ENCODE measurements at regions of chr19 and their contacts with region 1.

Region 1: DNA sequence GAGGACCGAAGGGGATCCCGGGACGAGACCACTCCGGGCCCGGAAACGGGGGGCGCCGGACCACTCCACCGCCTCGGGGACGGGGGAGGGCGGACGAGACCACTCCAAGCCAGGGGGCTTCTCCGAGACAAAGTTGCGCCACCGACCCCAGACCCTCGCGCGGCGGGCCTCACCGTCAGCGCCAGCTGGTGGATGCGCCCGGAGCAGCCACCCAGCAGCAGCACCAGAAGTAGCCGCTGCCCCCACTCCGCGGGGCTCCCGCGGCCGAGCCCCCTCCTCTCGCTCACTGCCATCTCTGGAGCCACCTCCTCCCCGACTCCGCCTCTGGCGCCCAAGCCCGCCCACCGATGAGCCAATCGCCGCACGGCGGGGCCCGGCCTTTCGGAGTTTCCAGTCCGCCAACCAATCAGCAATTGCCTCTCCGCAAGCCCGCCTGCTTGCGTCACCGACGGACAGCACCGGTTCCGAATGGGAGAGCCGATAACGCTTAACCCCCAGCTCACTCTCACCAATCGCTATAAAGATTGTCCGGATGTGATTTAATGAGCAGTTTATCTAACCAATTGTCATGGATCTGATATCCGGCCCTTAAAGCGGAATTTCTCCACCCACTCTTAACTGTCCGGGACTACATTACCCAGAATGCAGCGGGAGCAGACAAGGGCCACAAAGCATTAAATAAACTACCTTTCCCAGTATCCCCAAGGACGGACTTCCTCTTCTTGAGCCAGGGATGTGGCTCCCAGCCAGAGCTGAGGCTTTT is at the start of gene GPR108:
- DNase-seq: peak; percentile 98
- CTCF ChIP-seq: no peak

Region 2: DNA sequence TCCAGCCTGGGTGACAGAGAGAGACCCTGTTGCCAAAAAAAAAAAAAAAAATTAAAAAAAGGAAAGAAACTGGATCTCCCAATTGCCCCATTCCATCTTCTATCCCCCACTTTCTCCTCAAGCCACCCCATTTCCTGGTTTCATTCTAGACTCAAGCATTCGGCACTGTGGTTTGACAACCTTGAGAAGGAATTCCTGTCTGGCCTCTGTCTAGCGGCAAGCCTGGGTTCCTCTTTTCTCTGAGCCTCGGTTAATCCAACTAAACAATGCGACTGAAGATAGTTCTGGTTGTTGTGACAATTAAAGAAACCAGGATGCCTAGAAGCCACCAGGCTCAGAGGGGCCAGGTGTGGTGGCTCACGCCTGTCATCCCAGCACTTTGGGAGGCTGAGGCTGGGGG is 13.7 kb before region 1 on chr19:
- CTCF ChIA-PET with region 1: interaction called, 11 read pairs
- POLR2A ChIA-PET with region 1: no interaction called
- DNase-seq: no peak
- CTCF ChIP-seq: no peak

Region 3: GRCh38 chr19:6753178-6754031 is 15.9 kb after region 1 on chr19:
- CTCF ChIA-PET with region 1: interaction called, 14 read pairs
- POLR2A ChIA-PET with region 1: interaction called, 3 read pairs
- DNase-seq: peak; percentile 91
- CTCF ChIP-seq: peak; percentile 66

Region 4: DNA sequence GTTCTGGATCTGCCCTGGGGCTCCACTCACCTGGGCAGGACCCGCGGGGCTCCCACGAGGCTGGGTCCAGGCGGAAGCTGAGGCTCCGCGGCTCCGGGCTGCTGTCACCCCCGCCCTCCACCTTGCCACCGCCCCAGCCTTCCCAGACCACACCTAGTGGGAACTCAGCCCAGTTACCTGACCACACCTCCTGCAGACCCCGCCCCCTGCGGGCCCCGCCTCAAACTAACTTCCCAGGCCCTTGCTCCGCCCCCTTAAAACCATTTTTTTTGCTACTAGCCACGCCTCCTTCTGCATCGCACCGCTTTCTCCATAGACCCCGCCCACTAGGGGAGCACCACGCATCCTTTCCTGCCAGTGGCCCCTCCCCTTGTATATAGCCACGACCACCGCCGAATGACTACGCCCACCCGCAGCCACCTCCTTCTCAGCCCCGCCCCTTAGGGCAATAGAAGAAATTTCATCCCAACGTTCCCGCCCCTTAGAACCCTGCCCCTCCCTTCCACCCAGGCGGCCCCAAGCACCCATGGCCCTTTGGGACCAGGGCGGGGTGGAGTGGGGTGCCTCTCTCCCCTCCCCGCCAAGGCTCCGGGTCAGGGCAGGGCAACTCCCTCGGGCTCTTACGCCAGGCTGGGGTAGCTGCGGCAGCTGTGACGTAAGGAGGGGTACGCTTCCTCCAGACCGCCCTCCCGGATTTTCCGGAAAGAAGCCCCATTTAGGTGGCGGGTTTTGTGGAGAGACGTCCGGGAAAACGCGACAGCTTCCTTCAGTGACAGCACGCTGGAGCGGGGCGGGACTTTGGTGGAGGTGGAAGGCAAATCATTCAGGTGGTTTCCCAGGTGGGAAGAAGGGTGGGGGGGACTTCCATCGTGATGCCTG is 30.1 kb after region 1 on chr19 and contains the start of gene SH2D3A:
- CTCF ChIA-PET with region 1: interaction called, 25 read pairs
- POLR2A ChIA-PET with region 1: interaction called, 3 read pairs
- DNase-seq: peak; percentile 95
- CTCF ChIP-seq: peak; percentile 3

Region 5: GRCh38 chr19:6809262-6809661 is 71.8 kb after region 1 on chr19:
- CTCF ChIA-PET with region 1: no interaction called
- POLR2A ChIA-PET with region 1: no interaction called
- DNase-seq: no peak
- CTCF ChIP-seq: no peak

Measured in GM10248 (cell line).